Activated CD4-positive, alpha-beta memory T cell treated with anti-CD3 and anti-CD28 coated beads, Interleukin-2, amount 10 ng/mL, durations not matched to agents 7 days and 5 days (primary cell): ENCODE measurements at regions of chr17 and their contacts with region 1.

Region 1: DNA sequence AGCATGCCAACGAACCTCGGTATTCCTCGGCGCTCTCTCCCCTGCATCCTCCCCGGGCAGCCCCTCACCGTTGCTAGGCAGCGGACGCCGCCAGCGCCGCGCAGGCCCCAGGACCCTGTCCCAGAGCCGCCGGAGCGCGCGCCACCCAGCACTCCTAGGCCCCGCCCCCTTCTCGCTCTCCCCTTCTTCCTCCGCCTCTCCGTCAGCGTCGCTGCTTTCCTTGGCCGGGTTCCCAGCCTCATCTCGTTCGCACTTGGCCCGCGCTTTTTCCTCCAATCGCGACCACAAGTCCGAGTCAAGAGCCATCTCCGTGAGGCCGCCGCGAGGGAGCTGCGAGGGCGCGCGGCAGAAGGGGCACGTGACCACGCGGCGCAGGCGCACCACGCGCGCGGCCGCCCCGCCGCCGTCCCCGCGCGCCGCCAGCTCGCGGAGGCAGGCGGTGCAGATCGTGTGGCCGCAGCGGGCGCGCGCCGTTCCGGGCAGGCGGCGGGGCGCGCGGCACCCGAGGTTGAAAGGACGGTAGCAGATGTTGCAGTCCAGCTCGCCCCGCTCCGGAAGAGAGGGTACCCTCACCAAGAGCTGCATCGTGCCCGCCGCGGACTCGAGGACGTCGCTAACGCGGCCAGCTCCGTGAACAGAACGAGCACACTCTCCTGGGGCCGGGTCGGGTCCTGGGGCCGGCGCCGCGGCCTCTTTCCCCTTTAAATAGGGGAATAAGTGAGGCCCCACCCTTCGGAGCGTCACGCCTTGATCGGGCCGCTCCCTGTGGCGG is at the start of gene RNF227:
- DNase-seq: peak; percentile 84
- H3K4me3 Mint-ChIP-seq: peak within 1 kb of the TSS; percentile 90
- H3K27ac Mint-ChIP-seq: peak within 1 kb of the TSS; percentile 88
- H3K4me1 Mint-ChIP-seq: peaks cover 35% of the 10 kb centered on the region
- H3K27me3 Mint-ChIP-seq: no peaks in the 10 kb centered on the region
- total RNA-seq, gene RNF227: 3.6 to 3.7 TPM

Region 2: DNA sequence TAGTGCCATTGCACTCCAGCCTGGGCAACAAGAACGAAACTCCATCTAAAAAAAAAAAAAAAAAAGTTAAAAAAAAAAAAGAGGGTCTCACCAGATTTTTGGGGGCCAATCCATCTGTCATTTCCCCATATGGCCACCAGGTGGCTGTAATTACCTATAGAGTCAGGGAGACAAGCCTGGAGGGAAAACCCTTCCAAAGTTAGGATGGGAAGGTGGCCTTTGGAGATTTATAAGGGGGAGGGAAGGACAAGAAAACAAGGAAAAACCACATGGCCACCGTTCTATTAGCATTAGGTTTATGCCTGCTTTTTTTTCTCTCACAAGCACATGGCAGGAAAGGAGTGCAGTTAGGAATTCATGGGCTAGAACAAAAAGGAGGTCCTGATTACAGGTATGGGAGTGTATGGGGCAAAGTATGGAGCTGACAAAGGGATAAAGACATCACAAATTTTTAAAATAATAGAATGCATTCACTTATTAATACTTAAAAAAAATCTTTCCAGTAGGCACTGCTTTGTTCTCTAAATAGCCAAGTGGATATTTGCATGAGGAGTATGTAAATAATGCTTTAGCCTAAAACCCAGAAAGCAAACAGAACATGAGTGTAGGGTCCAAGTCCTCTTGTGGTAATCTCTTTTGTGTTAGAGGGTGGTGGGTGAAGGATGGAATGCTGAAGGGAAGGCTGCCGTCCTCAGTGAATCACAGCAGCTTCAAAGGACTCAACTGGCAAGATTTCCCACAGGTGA is 52.9 kb before region 1 on chr17:
- CTCF ChIA-PET with region 1: interaction called, 12 read pairs
- POLR2A ChIA-PET with region 1: no interaction called
- DNase-seq: no peak
- H3K4me3 Mint-ChIP-seq: no peak overlapping the region
- H3K27ac Mint-ChIP-seq: no peak overlapping the region
- H3K4me1 Mint-ChIP-seq: peaks cover 11% of the 10 kb centered on the region
- H3K27me3 Mint-ChIP-seq: no peaks in the 10 kb centered on the region

Region 3: GRCh38 chr17:7944326-7944725 is 28.5 kb after region 1 on chr17:
- CTCF ChIA-PET with region 1: no interaction called
- POLR2A ChIA-PET with region 1: no interaction called
- DNase-seq: no peak
- H3K4me3 Mint-ChIP-seq: no peak overlapping the region
- H3K27ac Mint-ChIP-seq: no peak overlapping the region
- H3K4me1 Mint-ChIP-seq: peaks cover 6% of the 10 kb centered on the region
- H3K27me3 Mint-ChIP-seq: no peaks in the 10 kb centered on the region

Region 4: GRCh38 chr17:7997186-7997585 is 81.4 kb after region 1 on chr17:
- CTCF ChIA-PET with region 1: interaction called, 10 read pairs
- POLR2A ChIA-PET with region 1: interaction called, 3 read pairs
- DNase-seq: peak; percentile 54
- H3K4me3 Mint-ChIP-seq: no peak overlapping the region
- H3K27ac Mint-ChIP-seq: no peak overlapping the region
- H3K4me1 Mint-ChIP-seq: peaks cover 9% of the 10 kb centered on the region
- H3K27me3 Mint-ChIP-seq: peaks cover 38% of the 10 kb centered on the region